ENCODE measurements at regions of chr1 and their contacts with region 1.

Region 1: DNA sequence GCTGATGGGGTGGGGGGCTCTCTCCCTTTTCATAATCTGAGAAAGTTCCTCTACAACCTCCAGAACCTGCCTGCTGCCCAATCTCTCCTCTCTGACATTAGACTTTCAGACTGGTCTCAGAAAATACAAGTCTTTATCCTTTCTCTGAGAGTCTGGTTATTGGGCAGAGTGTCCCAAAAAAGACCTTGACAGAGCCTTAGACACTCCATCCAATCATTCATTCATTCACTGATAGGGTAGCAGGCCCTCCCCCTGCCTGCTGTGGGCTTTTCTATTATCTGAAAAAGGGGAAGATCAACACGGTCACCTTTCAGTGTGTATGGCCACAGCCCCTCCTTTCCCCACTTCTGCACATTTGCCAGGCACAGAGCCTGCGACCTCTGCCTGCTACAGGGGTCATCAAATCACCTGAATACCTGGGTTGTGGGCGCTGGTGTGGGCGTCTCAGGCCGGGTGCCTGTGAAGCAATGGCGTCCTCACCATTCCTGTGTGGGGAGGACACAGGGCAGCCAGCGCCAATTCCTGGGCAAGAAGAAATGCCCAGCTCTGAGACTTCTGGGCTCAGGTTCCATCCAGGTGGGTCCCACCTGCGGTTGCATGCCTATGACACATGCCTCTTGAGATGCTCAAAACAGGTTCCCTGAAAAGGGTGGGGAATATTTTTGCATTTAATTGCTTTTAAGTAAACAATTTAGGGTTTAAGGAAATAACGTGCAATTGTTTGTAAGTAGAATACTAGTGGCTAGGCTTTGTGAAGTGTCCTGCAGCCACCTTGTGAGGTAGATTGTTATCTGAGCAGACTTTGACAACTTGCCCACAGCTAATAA is 52.8 kb downstream of the ELK4 start:
- DNase-seq: peak; percentile 50
- H3K4me3 Mint-ChIP-seq: no peak overlapping the region
- H3K27ac Mint-ChIP-seq: no peak overlapping the region
- H3K4me1 Mint-ChIP-seq: peaks cover 43% of the 10 kb centered on the region
- H3K27me3 Mint-ChIP-seq: peaks cover 19% of the 10 kb centered on the region
- CTCF ChIP-seq: no peak

Region 2: GRCh38 chr1:205543411-205544301 is 35.3 kb before region 1 on chr1:
- CTCF ChIA-PET with region 1: interaction called, 10 read pairs
- intact Hi-C with region 1: loop called (anchors 5 kb)
- DNase-seq: peak; percentile 82
- H3K4me3 Mint-ChIP-seq: peak overlapping the region; percentile 63
- H3K27ac Mint-ChIP-seq: peak overlapping the region; percentile 83
- H3K4me1 Mint-ChIP-seq: peaks cover 27% of the 10 kb centered on the region
- H3K27me3 Mint-ChIP-seq: peaks cover 8% of the 10 kb centered on the region
- CTCF ChIP-seq: no peak